Vagina (tissue), 2 donors: ENCODE measurements at regions of chr2 and their contacts with region 1.

Region 1: GRCh38 chr2:160984426-160985077 is 175.7 kb upstream of the TANK start:
- DNase-seq: no peak
- H3K4me3 ChIP-seq: no peak overlapping the region
- H3K27ac ChIP-seq: no peak overlapping the region
- H3K4me1 ChIP-seq: peaks cover 5% of the 10 kb centered on the region
- H3K27me3 ChIP-seq: no peaks in the 10 kb centered on the region
- CTCF ChIP-seq: no peak
- POLR2A ChIP-seq: no peak

Region 2: GRCh38 chr2:160109936-160110673 is 874.4 kb before region 1 on chr2:
- intact Hi-C with region 1: loop called (anchors 5 kb)
- DNase-seq: no peak
- H3K4me3 ChIP-seq: no peak overlapping the region
- H3K27ac ChIP-seq: peak overlapping the region; percentile 56
- H3K4me1 ChIP-seq: peaks cover 5% of the 10 kb centered on the region
- H3K27me3 ChIP-seq: no peaks in the 10 kb centered on the region
- CTCF ChIP-seq: peak; percentile 69 to 86 (median 71)
- POLR2A ChIP-seq: no peak

Region 3: DNA sequence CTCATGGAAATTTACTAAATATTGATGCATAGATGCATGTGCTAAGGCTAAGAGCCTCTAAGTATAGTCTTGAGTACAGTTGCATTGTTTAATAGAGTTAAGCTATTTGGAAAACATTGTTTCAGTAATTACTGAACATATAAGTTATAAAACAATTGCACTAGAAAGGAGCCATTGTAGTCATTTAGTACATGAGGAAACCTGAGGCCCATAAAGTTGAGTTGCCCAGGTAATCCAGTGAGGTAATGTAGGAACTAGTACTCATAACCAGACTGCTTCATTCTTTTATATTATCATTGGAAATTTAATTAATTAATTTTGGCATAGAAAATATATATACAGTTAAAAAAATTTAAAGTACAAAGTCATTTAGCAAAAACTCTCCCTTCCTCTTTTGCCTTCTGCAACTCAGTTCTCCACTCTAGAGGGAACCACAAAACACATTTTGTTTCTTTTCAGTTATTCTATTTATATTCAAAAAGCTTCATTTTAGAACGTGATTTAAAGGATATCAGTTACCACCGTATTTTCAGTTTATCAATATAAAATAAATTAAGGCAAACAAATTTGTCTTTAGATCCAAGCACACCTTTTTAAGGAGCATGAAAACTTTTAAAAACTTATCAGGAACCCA is 403.7 kb after region 1 on chr2:
- intact Hi-C with region 1: no loop called
- DNase-seq: no peak
- H3K4me3 ChIP-seq: no peak overlapping the region
- H3K27ac ChIP-seq: no peak overlapping the region
- H3K4me1 ChIP-seq: no peaks in the 10 kb centered on the region
- H3K27me3 ChIP-seq: no peaks in the 10 kb centered on the region
- CTCF ChIP-seq: no peak
- POLR2A ChIP-seq: no peak